ENCODE measurements at regions of chr20 and their contacts with region 1.

Region 1: DNA sequence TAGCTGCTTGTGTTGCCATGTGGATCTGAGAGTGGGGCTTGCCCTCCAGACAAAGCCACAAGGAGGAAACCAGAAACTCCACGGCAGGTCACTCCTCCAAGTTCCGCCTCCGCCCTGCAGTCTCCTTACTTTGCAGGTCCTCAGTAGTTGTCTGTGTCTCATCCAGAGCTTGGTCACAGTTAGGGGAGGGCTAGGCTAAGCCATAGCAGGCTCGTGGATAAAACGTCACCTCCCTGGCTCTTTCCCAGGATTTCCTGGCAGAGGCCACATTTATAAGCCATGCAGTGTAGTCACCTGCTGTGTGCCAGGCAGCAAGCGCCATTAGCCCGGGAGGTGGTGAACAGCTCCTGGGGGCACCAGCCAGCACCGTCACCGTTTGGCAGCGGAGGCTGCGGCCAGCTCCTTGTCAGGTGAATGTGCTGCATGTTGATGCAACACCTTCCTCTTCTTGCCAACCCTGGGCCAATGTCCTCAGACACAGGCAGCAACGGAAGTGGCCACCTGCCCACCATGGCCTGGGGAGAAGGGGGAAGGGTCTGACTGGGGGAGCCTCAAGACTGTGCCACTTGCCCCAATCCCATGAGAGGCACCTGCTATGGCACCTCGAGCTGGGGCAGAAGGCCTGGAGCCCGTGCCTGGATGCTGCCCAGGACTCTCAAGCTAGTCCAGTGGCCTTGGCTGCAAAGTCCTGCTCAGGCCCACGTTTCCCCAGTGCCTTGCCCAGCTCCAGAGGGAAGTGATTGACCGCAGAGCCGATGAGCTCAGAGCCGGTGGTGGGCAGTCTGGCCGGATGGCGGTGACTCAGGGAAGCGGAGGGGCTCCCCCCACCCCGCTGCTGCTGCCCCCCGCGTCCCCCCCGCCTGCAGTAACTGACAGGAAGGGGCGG is 39.0 kb upstream of the SLCO4A1 start:
- DNase-seq: peak; percentile 65
- ATAC-seq: peak; percentile 34
- H3K4me3 ChIP-seq: peak overlapping the region in 3 of 5 experiments; percentile 17 to 30 (median 27)
- H3K4me3 Mint-ChIP-seq: peak overlapping the region; percentile 82
- H3K27ac ChIP-seq: peak overlapping the region; percentile 20 to 63
- H3K27ac Mint-ChIP-seq: peak overlapping the region; percentile 87
- H3K4me1 ChIP-seq: peaks cover 69 to 77% of the 10 kb centered on the region in 2 donors
- H3K4me1 Mint-ChIP-seq: peaks cover 78% of the 10 kb centered on the region
- H3K27me3 ChIP-seq: no peaks in the 10 kb centered on the region
- H3K27me3 Mint-ChIP-seq: no peaks in the 10 kb centered on the region
- CTCF ChIP-seq: no peak

Region 2: DNA sequence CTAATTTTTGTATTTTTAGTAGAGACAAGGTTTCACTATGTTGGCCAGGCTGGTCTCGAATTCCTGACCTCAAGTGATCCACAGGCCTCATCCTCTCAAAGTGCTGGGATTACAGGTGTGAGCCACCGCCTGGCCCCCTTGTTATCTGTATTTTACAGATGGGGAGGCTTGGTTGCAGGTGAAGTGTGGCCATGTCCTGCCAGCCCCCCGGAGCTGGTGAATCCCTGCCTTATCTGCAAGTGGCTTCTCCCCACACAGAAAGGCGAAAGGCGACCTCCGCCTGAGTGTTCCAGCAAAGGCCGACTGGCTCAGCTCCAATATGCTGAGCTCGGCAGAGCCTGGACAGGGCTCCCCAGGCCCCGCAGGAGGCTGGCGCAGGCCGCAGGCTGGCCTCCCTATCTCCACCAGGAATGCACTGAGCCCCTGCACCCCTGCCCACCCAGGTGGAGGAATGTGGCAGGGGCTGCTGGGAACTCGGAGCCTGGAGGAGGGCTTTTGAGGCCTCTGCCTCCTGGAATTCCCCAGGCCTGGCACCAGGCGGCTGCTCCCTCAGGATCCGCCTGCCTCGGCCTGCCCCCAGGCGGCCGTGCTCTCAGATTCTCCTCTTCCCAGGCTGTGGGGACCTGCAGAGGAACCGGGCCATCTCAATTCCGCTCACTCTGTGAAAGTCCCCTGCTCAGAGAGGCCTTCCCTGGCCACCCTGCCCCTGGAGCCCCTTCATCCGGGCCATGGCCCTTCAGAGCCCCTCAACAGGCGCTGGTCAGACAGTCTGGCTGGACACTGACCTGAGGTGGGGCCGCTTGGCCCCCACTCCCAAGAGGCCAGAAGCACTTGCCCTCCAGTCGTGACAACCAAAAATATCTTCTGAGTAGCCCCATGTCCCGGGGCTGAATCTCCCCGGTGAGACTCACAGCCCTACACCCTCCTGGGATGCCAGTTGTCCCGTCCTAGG is 226.9 kb before region 1 on chr20:
- CTCF ChIA-PET with region 1: no interaction called
- POLR2A ChIA-PET with region 1: interaction called, 10 read pairs
- intact Hi-C with region 1: no loop called
- DNase-seq: no peak
- ATAC-seq: no peak
- H3K4me3 ChIP-seq: no peak overlapping the region
- H3K4me3 Mint-ChIP-seq: no peak overlapping the region
- H3K27ac ChIP-seq: no peak overlapping the region
- H3K27ac Mint-ChIP-seq: no peak overlapping the region
- H3K4me1 ChIP-seq: peaks cover 0 to 3% of the 10 kb centered on the region in 2 donors
- H3K4me1 Mint-ChIP-seq: no peaks in the 10 kb centered on the region
- H3K27me3 ChIP-seq: peaks cover 0 to 7% (median under 1%) of the 10 kb centered on the region in 4 experiments
- H3K27me3 Mint-ChIP-seq: no peaks in the 10 kb centered on the region
- CTCF ChIP-seq: no peak

Region 3: GRCh38 chr20:62500237-62500864 is 102.9 kb before region 1 on chr20:
- CTCF ChIA-PET with region 1: interaction called, 10 read pairs
- POLR2A ChIA-PET with region 1: no interaction called
- intact Hi-C with region 1: loop called (anchors 5 kb)
- DNase-seq: peak; percentile 87
- ATAC-seq: peak; percentile 65
- H3K4me3 ChIP-seq: no peak overlapping the region
- H3K4me3 Mint-ChIP-seq: peak overlapping the region; percentile 15
- H3K27ac ChIP-seq: no peak overlapping the region
- H3K27ac Mint-ChIP-seq: peak overlapping the region; percentile 67
- H3K4me1 ChIP-seq: peaks cover 28 to 44% of the 10 kb centered on the region in 2 donors
- H3K4me1 Mint-ChIP-seq: peaks cover 36% of the 10 kb centered on the region
- H3K27me3 ChIP-seq: peaks cover 0 to 5% (median 0%) of the 10 kb centered on the region in 4 experiments
- H3K27me3 Mint-ChIP-seq: peaks cover 3% of the 10 kb centered on the region
- CTCF ChIP-seq: peak; percentile 80

Region 4: GRCh38 chr20:62550087-62550632 is 53.1 kb before region 1 on chr20:
- CTCF ChIA-PET with region 1: no interaction called
- POLR2A ChIA-PET with region 1: no interaction called
- intact Hi-C with region 1: loop called (anchors 10 kb)
- DNase-seq: no peak
- ATAC-seq: no peak
- H3K4me3 ChIP-seq: peak overlapping the region in 3 of 5 experiments; percentile 33 to 47 (median 33)
- H3K4me3 Mint-ChIP-seq: peak overlapping the region; percentile 76
- H3K27ac ChIP-seq: no peak overlapping the region
- H3K27ac Mint-ChIP-seq: no peak overlapping the region
- H3K4me1 ChIP-seq: peaks cover 14 to 18% of the 10 kb centered on the region in 2 donors
- H3K4me1 Mint-ChIP-seq: peaks cover 10% of the 10 kb centered on the region
- H3K27me3 ChIP-seq: peaks cover 0 to 58% (median 16%) of the 10 kb centered on the region in 4 experiments
- H3K27me3 Mint-ChIP-seq: peaks cover 27% of the 10 kb centered on the region
- CTCF ChIP-seq: no peak

Region 5: GRCh38 chr20:62590301-62591121 is 12.8 kb before region 1 on chr20:
- CTCF ChIA-PET with region 1: no interaction called
- POLR2A ChIA-PET with region 1: no interaction called
- intact Hi-C with region 1: no loop called
- DNase-seq: no peak
- ATAC-seq: no peak
- H3K4me3 ChIP-seq: no peak overlapping the region
- H3K4me3 Mint-ChIP-seq: no peak overlapping the region
- H3K27ac ChIP-seq: no peak overlapping the region
- H3K27ac Mint-ChIP-seq: no peak overlapping the region
- H3K4me1 ChIP-seq: no peaks in the 10 kb centered on the region
- H3K4me1 Mint-ChIP-seq: peaks cover 4% of the 10 kb centered on the region
- H3K27me3 ChIP-seq: peaks cover 0 to 23% (median 3%) of the 10 kb centered on the region in 4 experiments
- H3K27me3 Mint-ChIP-seq: peaks cover 33% of the 10 kb centered on the region
- CTCF ChIP-seq: no peak

Region 6: DNA sequence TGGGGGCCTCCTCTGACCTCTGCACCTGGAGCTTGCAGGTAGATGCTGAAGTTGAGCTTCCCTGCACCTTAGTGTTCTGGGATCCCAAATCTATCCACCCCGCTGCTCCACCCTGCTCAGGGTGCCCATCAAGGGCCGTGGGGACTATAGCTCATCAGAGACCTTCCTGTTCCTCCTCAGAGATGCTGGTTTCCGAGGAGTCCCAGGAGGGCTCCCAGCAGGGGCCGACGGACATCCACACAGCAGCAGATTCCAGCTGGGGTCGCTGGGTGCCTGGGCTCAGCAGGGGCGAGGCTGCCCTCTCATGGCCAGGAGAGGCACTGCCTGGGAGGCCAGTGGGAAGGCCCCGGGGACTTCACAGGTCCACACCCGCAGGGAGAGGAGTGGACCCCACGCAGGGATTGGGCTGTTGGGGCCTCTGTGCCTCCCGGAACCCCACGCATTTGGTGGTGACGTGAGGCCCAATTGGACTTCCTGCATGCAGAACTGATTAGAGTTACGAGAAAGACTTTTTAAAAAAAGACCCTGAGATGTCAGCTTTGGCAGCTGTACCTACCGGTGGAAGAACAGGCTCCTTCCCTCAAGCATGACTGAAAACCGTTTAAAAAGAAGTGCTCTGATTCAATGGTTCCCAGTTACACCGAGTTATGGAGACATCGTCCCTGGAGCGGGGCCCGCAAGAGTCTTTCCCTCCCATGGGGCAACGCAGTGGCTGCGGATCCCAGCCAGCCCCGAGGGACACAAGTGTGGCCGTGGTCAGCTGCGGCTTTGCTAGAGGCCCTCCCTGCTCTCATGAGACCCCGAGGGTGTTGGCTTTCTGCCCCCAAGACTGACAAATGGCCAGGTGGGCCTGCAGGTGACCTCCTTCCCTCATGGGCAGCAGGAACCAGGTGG is 13.7 kb after region 1 on chr20:
- CTCF ChIA-PET with region 1: interaction called, 22 read pairs
- POLR2A ChIA-PET with region 1: interaction called, 4 read pairs
- intact Hi-C with region 1: no loop called
- DNase-seq: peak; percentile 81
- ATAC-seq: peak; percentile 71
- H3K4me3 ChIP-seq: no peak overlapping the region
- H3K4me3 Mint-ChIP-seq: peak overlapping the region; percentile 83
- H3K27ac ChIP-seq: peak overlapping the region; percentile 54 to 73
- H3K27ac Mint-ChIP-seq: peak overlapping the region; percentile 94
- H3K4me1 ChIP-seq: peaks cover 31 to 33% of the 10 kb centered on the region in 2 donors
- H3K4me1 Mint-ChIP-seq: peaks cover 41% of the 10 kb centered on the region
- H3K27me3 ChIP-seq: no peaks in the 10 kb centered on the region
- H3K27me3 Mint-ChIP-seq: no peaks in the 10 kb centered on the region
- CTCF ChIP-seq: peak; percentile 92

Region 7: DNA sequence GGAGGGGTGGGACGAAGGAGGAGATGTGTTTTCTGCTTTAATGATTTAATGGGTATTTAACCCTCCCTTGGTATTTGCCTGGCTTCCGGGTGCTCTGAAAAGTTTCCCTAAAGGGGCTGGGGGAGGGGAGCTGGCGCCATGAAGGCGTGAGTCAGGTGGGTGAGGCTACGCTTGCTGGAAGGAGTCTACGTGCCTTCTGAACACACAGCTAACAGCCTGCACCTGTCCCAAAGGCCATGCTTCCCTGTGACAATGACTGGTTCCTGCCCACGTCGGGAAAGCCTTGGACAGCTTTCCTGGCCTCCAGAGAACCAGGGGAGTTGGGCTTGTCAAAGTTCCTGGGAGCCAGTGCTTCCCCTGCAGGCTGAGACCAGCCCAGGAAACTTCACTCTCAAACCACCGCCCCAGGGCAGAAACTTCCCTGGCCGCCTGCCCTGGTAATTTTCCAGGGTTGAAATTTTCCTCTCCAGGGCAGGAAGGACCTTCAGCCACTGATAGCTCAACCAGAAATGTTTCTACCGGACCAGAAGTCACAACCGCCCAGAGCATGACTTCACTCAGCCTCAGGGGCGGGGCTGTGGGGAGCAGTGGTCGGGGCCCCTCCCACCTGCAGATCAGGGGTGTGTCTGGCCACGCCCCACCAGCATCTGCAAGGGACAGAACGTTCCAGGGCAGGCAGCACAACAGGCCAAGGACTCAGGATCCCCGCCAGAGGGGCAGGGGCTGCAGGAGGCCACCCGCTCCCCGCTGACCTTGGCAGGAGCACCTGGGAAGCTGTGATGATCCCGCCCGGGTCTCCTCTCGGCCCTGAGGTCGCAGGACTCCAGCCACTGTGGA is 20.4 kb after region 1 on chr20:
- CTCF ChIA-PET with region 1: interaction called, 10 read pairs
- POLR2A ChIA-PET with region 1: interaction called, 6 read pairs
- intact Hi-C with region 1: loop called (anchors 1 kb)
- DNase-seq: peak; percentile 92
- ATAC-seq: peak; percentile 87
- H3K4me3 ChIP-seq: peak overlapping the region in 4 of 5 experiments; percentile 26 to 56 (median 49)
- H3K4me3 Mint-ChIP-seq: peak overlapping the region; percentile 85
- H3K27ac ChIP-seq: peak overlapping the region; percentile 77 to 94
- H3K27ac Mint-ChIP-seq: peak overlapping the region; percentile 98
- H3K4me1 ChIP-seq: peaks cover 45 to 50% of the 10 kb centered on the region in 2 donors
- H3K4me1 Mint-ChIP-seq: peaks cover 39% of the 10 kb centered on the region
- H3K27me3 ChIP-seq: no peaks in the 10 kb centered on the region
- H3K27me3 Mint-ChIP-seq: no peaks in the 10 kb centered on the region
- CTCF ChIP-seq: no peak